ENCODE measurements at regions of chr17 and their contacts with region 1.

Region 1: DNA sequence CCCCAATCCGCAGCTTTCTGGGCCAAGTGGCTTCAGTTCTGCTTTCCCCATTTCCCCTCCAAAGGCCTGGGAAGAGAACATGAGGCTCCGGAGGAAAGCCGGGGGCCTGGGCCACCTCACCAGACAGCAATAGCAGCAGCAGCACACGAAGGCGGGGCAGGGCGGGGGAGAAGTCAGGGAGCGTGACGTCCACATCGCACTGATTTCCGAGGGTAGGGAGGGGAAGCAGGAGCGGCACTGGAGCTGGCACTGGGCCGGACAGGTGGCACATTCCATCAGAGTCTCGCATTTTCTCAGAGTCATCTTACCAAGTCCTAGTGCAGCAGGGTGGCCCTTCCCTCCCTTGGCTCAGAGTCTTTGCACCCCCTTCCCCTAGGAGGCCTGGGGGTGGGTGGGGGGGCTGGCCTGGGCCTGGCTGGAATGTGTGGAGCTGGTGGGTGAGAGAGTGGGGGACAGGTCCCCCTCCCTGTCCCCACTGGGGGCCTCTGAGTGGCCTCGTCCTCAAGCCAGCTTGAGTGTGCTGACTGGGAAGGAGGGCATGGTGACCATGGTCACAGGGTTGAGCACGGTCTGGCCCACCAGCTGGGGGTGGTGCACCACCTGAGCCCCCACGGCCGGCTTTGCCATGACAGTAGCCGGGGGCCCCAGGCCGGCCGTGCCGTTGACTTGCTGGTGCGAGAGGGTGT is 14.3 kb downstream of the MNT start:
- DNase-seq: no peak
- H3K4me3 ChIP-seq: no peak overlapping the region
- H3K4me3 Mint-ChIP-seq: no peak overlapping the region
- H3K27ac ChIP-seq: no peak overlapping the region
- H3K27ac Mint-ChIP-seq: peak overlapping the region in 1 of 7 donors; percentile 21
- H3K4me1 ChIP-seq: peaks cover 23 to 27% of the 10 kb centered on the region in 2 donors
- H3K4me1 Mint-ChIP-seq: peaks cover 29% of the 10 kb centered on the region
- H3K27me3 ChIP-seq: no peaks in the 10 kb centered on the region
- H3K27me3 Mint-ChIP-seq: peaks cover 0 to 2% (median 0%) of the 10 kb centered on the region in 3 donors
- CTCF ChIP-seq: no peak

Region 2: GRCh38 chr17:2351269-2351668 is 35.3 kb before region 1 on chr17:
- intact Hi-C with region 1: no loop called
- DNase-seq: no peak
- H3K4me3 ChIP-seq: no peak overlapping the region
- H3K4me3 Mint-ChIP-seq: no peak overlapping the region
- H3K27ac ChIP-seq: no peak overlapping the region
- H3K27ac Mint-ChIP-seq: no peak overlapping the region
- H3K4me1 ChIP-seq: no peaks in the 10 kb centered on the region
- H3K4me1 Mint-ChIP-seq: no peaks in the 10 kb centered on the region
- H3K27me3 ChIP-seq: no peaks in the 10 kb centered on the region
- H3K27me3 Mint-ChIP-seq: peaks cover 0 to 1% (median 0%) of the 10 kb centered on the region in 3 donors
- CTCF ChIP-seq: no peak

Region 3: GRCh38 chr17:2672026-2672425 is 285.5 kb after region 1 on chr17:
- intact Hi-C with region 1: loop called in 1 of 2 experiments (anchors 10 kb)
- DNase-seq: no peak
- H3K4me3 ChIP-seq: no peak overlapping the region
- H3K4me3 Mint-ChIP-seq: no peak overlapping the region
- H3K27ac ChIP-seq: no peak overlapping the region
- H3K27ac Mint-ChIP-seq: no peak overlapping the region
- H3K4me1 ChIP-seq: no peaks in the 10 kb centered on the region
- H3K4me1 Mint-ChIP-seq: no peaks in the 10 kb centered on the region
- H3K27me3 ChIP-seq: no peaks in the 10 kb centered on the region
- H3K27me3 Mint-ChIP-seq: peaks cover 0 to 2% (median 0%) of the 10 kb centered on the region in 3 donors
- CTCF ChIP-seq: no peak